ENCODE measurements at regions of chr7 and their contacts with region 1.

Region 1: DNA sequence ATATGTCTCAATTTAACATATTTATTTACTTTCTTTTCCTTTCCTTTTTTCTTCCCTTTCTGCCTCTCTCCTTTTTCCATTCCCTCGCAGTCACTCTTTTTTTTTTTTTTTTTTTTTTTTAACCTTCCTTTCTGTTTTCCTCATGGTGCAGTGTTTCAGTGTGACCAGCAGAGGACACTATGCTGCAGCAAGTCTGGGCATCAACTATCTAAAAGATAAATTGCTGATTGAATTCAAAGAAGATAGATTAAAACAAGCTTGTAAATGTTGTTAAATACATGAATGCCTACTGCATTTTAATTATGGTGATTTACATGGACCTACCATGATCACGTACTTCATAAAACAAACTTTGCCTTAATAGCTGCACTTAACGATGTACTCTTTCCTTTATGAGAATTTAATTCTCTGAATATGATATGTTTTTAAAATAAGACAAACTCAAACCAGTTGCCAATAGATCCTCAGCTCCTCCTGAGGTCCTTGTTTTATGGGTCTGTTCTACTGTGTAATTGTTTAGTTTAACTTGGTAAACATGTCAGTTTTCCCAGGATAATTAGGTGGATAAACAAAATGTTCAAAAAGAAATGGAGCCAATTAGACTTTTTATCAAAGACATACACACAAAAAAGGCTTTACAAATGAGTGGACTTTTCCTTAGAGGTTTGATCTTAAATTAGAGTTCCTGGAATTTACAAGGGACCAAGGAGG is 101.0 kb upstream of the AGR3 start:
- DNase-seq: peak; percentile 52
- ATAC-seq: peak; percentile 58
- H3K4me3 ChIP-seq: no peak overlapping the region
- H3K4me3 Mint-ChIP-seq: no peak overlapping the region
- H3K27ac ChIP-seq: no peak overlapping the region
- H3K27ac Mint-ChIP-seq: no peak overlapping the region
- H3K4me1 ChIP-seq: peaks cover 0 to 2% of the 10 kb centered on the region in 2 donors
- H3K4me1 Mint-ChIP-seq: peaks cover 8% of the 10 kb centered on the region
- H3K27me3 ChIP-seq: no peaks in the 10 kb centered on the region
- H3K27me3 Mint-ChIP-seq: no peaks in the 10 kb centered on the region
- CTCF ChIP-seq: peak; percentile 99

Region 2: GRCh38 chr7:16926283-16926682 is 56.5 kb before region 1 on chr7:
- CTCF ChIA-PET with region 1: interaction called, 5 read pairs
- POLR2A ChIA-PET with region 1: no interaction called
- intact Hi-C with region 1: loop called (anchors 5 kb)
- DNase-seq: peak; percentile 41
- ATAC-seq: peak; percentile 44
- H3K4me3 ChIP-seq: no peak overlapping the region
- H3K4me3 Mint-ChIP-seq: no peak overlapping the region
- H3K27ac ChIP-seq: no peak overlapping the region
- H3K27ac Mint-ChIP-seq: no peak overlapping the region
- H3K4me1 ChIP-seq: peaks cover 24 to 34% of the 10 kb centered on the region in 2 donors
- H3K4me1 Mint-ChIP-seq: peaks cover 42% of the 10 kb centered on the region
- H3K27me3 ChIP-seq: peaks cover 0 to 19% (median 1%) of the 10 kb centered on the region in 4 experiments
- H3K27me3 Mint-ChIP-seq: peaks cover 15% of the 10 kb centered on the region
- CTCF ChIP-seq: peak; percentile 47

Region 3: GRCh38 chr7:16993543-16993942 is 10.7 kb after region 1 on chr7:
- CTCF ChIA-PET with region 1: interaction called, 15 read pairs
- POLR2A ChIA-PET with region 1: no interaction called
- intact Hi-C with region 1: no loop called
- DNase-seq: no peak
- ATAC-seq: no peak
- H3K4me3 ChIP-seq: no peak overlapping the region
- H3K4me3 Mint-ChIP-seq: no peak overlapping the region
- H3K27ac ChIP-seq: no peak overlapping the region
- H3K27ac Mint-ChIP-seq: no peak overlapping the region
- H3K4me1 ChIP-seq: no peaks in the 10 kb centered on the region
- H3K4me1 Mint-ChIP-seq: no peaks in the 10 kb centered on the region
- H3K27me3 ChIP-seq: no peaks in the 10 kb centered on the region
- H3K27me3 Mint-ChIP-seq: peaks cover 3% of the 10 kb centered on the region
- CTCF ChIP-seq: no peak

Region 4: DNA sequence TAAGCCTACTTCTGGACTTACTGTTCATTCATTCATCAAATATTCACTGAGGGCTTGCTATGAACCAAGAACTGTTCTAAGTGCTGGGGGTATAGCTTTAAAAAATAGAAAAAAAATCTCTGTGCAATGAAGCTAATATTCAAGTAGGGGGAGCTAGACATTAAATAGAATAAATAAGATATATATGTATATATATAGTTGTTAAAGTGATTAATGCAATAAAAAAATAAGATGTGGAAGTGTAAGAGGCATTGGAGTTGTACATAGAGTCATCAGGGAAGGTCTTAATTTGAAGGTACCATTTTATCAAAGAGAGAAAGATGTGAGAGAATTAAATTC is 80.2 kb after region 1 on chr7:
- CTCF ChIA-PET with region 1: no interaction called
- POLR2A ChIA-PET with region 1: no interaction called
- intact Hi-C with region 1: no loop called
- DNase-seq: no peak
- ATAC-seq: no peak
- H3K4me3 ChIP-seq: no peak overlapping the region
- H3K4me3 Mint-ChIP-seq: no peak overlapping the region
- H3K27ac ChIP-seq: no peak overlapping the region
- H3K27ac Mint-ChIP-seq: no peak overlapping the region
- H3K4me1 ChIP-seq: no peaks in the 10 kb centered on the region
- H3K4me1 Mint-ChIP-seq: peaks cover 11% of the 10 kb centered on the region
- H3K27me3 ChIP-seq: no peaks in the 10 kb centered on the region
- H3K27me3 Mint-ChIP-seq: no peaks in the 10 kb centered on the region
- CTCF ChIP-seq: no peak

Region 5: GRCh38 chr7:17640730-17641377 is 658.1 kb after region 1 on chr7:
- CTCF ChIA-PET with region 1: no interaction called
- POLR2A ChIA-PET with region 1: no interaction called
- intact Hi-C with region 1: loop called (anchors 5 kb)
- DNase-seq: peak; percentile 34
- ATAC-seq: no peak
- H3K4me3 ChIP-seq: no peak overlapping the region
- H3K4me3 Mint-ChIP-seq: no peak overlapping the region
- H3K27ac ChIP-seq: no peak overlapping the region
- H3K27ac Mint-ChIP-seq: no peak overlapping the region
- H3K4me1 ChIP-seq: no peaks in the 10 kb centered on the region
- H3K4me1 Mint-ChIP-seq: no peaks in the 10 kb centered on the region
- H3K27me3 ChIP-seq: no peaks in the 10 kb centered on the region
- H3K27me3 Mint-ChIP-seq: peaks cover 6% of the 10 kb centered on the region
- CTCF ChIP-seq: peak; percentile 86

Region 6: GRCh38 chr7:17680943-17681351 is 698.2 kb after region 1 on chr7:
- CTCF ChIA-PET with region 1: interaction called, 4 read pairs
- POLR2A ChIA-PET with region 1: no interaction called
- intact Hi-C with region 1: loop called (anchors 10 kb)
- DNase-seq: peak; percentile 41
- ATAC-seq: no peak
- H3K4me3 ChIP-seq: no peak overlapping the region
- H3K4me3 Mint-ChIP-seq: no peak overlapping the region
- H3K27ac ChIP-seq: no peak overlapping the region
- H3K27ac Mint-ChIP-seq: no peak overlapping the region
- H3K4me1 ChIP-seq: no peaks in the 10 kb centered on the region
- H3K4me1 Mint-ChIP-seq: no peaks in the 10 kb centered on the region
- H3K27me3 ChIP-seq: no peaks in the 10 kb centered on the region
- H3K27me3 Mint-ChIP-seq: no peaks in the 10 kb centered on the region
- CTCF ChIP-seq: peak; percentile 84